Mammary epithelial cell (primary cell): ENCODE measurements at regions of chr6 and their contacts with region 1.

Region 1: DNA sequence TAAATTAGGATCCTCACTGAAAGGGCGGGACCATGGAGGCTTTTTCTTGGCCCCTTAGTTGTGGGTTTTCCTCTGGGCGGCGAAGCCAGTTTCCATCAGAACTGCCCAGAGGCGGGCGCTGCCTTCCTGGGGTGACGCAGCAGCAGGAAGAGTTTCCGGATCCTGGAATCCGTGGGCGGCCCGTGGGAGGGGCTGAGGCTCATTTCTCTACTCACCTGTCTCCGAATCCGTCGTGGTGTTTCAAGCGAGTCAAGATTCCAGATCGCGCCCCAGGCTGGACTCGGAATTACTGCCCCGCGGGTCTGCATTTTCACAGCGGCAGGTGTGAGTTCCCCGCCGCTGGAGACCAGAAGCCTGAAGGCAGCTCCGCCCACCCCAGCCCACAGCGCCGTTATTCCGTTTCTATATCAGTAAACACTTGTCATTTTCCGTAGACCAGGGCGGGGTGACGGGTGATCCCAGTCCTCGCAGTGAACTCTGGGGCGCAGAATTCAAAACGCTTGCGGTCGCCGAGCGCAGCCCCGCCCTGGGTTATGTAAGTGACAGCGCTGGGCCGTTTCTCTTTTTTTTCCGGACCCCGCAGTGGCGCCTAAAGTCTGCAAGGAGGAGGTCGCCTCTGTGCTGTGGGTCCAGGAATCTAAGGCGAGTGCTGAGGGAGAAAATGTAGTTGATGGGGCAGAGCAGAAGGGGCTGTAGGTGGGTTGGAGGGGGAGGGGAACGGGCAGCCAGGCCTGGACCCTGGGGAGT is 27.2 kb upstream of the POU5F1 start:
- DNase-seq: peak; percentile 82
- H3K4me3 ChIP-seq: peak overlapping the region; percentile 51 to 58 (median 57)
- H3K27ac ChIP-seq: peak overlapping the region; percentile 87
- H3K4me1 ChIP-seq: peaks cover 10% of the 10 kb centered on the region
- H3K27me3 ChIP-seq: no peaks in the 10 kb centered on the region
- CTCF ChIP-seq: no peak

Region 2: DNA sequence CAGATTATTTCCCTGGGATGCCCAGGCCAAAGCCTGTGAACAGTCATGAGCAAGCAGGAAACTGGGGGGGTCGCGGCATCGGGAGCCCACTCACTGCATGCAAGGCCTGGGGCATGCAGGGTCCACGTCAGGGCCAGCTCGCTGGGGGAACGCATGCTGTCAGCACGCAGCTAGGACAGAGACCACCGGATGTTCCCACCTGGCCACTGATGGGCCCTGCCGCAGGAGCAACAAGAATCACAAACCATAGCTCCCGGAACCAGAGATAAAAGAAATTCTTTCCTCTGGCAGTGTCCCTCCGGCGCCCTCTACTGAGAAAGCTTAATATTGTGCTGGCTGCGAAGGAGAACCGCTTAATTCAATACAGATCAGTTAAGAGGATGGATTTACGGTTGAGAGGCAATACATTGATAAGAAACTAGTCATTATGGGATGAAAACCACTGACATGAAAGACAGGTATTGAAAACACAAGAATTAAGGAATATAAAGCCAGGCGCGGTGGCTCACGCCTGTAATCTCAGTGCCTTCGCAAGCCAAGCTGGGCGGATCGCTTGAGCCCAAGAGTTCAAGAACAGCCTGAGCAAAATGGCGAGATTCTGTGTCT is 118.0 kb before region 1 on chr6:
- CTCF ChIA-PET with region 1: no interaction called
- dilution Hi-C with region 1: no loop called
- in situ Hi-C with region 1: no loop called
- intact Hi-C with region 1: loop called (anchors 2 kb)
- DNase-seq: peak; percentile 49
- H3K4me3 ChIP-seq: peak overlapping the region in 1 of 3 experiments; percentile 27
- H3K27ac ChIP-seq: no peak overlapping the region
- H3K4me1 ChIP-seq: peaks cover 8% of the 10 kb centered on the region
- H3K27me3 ChIP-seq: no peaks in the 10 kb centered on the region
- CTCF ChIP-seq: peak; percentile 72 to 83

Region 3: DNA sequence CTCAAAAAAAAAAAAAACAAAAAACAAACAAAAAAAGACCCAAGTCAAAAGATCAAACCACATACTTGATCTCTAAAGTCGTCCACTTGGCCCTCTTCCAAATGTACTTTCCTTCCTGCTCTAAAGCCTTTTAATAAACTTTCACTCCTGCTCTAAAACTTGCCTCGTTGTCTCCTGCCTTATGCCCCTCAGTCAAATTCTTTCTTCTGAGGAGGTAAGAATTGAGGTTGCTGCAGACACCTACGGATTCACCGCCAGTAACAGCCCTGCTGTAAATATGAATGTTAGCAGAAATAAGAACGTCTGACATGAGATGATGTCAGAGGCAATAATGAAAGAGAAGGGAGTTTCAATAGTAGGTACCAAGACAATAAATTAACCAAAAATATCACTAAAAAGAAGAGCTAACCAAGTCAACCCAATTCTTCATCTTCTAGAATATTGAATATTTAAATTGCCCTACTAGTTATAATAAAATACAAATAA is 100.1 kb before region 1 on chr6:
- CTCF ChIA-PET with region 1: no interaction called
- dilution Hi-C with region 1: no loop called
- in situ Hi-C with region 1: no loop called
- intact Hi-C with region 1: no loop called
- DNase-seq: no peak
- H3K4me3 ChIP-seq: no peak overlapping the region
- H3K27ac ChIP-seq: no peak overlapping the region
- H3K4me1 ChIP-seq: peaks cover 20% of the 10 kb centered on the region
- H3K27me3 ChIP-seq: no peaks in the 10 kb centered on the region
- CTCF ChIP-seq: no peak

Region 4: GRCh38 chr6:31158140-31158862 is 39.4 kb before region 1 on chr6 and contains the start of gene TCF19:
- CTCF ChIA-PET with region 1: interaction called, 7 read pairs
- dilution Hi-C with region 1: no loop called
- in situ Hi-C with region 1: no loop called
- intact Hi-C with region 1: loop called (anchors 1 kb)
- DNase-seq: peak; percentile 99
- H3K4me3 ChIP-seq: peak within 1 kb of the TSS; percentile 76 to 86 (median 78)
- H3K27ac ChIP-seq: peak within 1 kb of the TSS; percentile 69
- H3K4me1 ChIP-seq: peaks cover 13% of the 10 kb centered on the region
- H3K27me3 ChIP-seq: no peaks in the 10 kb centered on the region
- CTCF ChIP-seq: no peak
- total RNA-seq, gene TCF19: 5.5 to 29.7 TPM

Region 5: DNA sequence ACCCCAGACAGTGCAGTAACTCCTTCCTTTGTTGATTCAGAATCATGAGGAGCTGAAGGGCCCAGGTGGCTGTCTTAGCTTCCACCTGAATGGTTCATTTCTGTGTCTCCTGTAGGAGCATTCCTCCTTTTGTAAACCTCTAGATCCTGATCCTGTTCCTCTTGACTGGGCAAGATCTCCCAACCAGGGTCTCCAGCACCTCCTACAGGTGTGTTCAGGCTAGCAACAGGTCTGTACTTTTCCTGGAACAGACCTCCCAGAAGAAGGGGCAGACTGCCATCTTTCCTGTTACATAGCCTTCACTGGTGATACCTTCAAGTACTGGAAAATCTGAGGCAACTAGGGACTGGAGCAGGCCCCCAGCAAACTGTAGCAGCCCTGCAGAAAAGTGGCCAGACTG is 124.1 kb after region 1 on chr6:
- CTCF ChIA-PET with region 1: no interaction called
- dilution Hi-C with region 1: no loop called
- in situ Hi-C with region 1: no loop called
- intact Hi-C with region 1: loop called (anchors 1 kb)
- DNase-seq: no peak
- H3K4me3 ChIP-seq: no peak overlapping the region
- H3K27ac ChIP-seq: no peak overlapping the region
- H3K4me1 ChIP-seq: no peaks in the 10 kb centered on the region
- H3K27me3 ChIP-seq: no peaks in the 10 kb centered on the region
- CTCF ChIP-seq: no peak

Region 6: GRCh38 chr6:31441365-31442267 is 243.9 kb after region 1 on chr6:
- CTCF ChIA-PET with region 1: no interaction called
- dilution Hi-C with region 1: no loop called
- in situ Hi-C with region 1: no loop called
- intact Hi-C with region 1: loop called (anchors 5 kb)
- DNase-seq: peak; percentile 32
- H3K4me3 ChIP-seq: peak overlapping the region in 1 of 3 experiments; percentile 35
- H3K27ac ChIP-seq: no peak overlapping the region
- H3K4me1 ChIP-seq: no peaks in the 10 kb centered on the region
- H3K27me3 ChIP-seq: peaks cover 3% of the 10 kb centered on the region
- CTCF ChIP-seq: peak; percentile 65 to 92